Activated CD4-positive, alpha-beta memory T cell treated with anti-CD3 and anti-CD28 coated beads for 36 hours (primary cell): ENCODE measurements at regions of chr3 and their contacts with region 1.

Region 1: GRCh38 chr3:56610669-56611335 is 53.8 kb downstream of the CCDC66 start:
- DNase-seq: no peak
- H3K4me3 Mint-ChIP-seq: no peak overlapping the region
- H3K27ac Mint-ChIP-seq: peak overlapping the region; percentile 53
- H3K4me1 Mint-ChIP-seq: peaks cover 66% of the 10 kb centered on the region
- H3K27me3 Mint-ChIP-seq: no peaks in the 10 kb centered on the region

Region 2: GRCh38 chr3:56677286-56677685 is 66.5 kb after region 1 on chr3:
- CTCF ChIA-PET with region 1: no interaction called
- POLR2A ChIA-PET with region 1: no interaction called
- intact Hi-C with region 1: loop called (anchors 10 kb)
- DNase-seq: no peak
- H3K4me3 Mint-ChIP-seq: no peak overlapping the region
- H3K27ac Mint-ChIP-seq: peak overlapping the region; percentile 44
- H3K4me1 Mint-ChIP-seq: peaks cover 51% of the 10 kb centered on the region
- H3K27me3 Mint-ChIP-seq: no peaks in the 10 kb centered on the region